T-cell (primary cell): ENCODE measurements at regions of chr2 and their contacts with region 1.

Region 1: GRCh38 chr2:85888684-85889626 is at the start of gene ST3GAL5:
- DNase-seq: peak; percentile 81 to 97 (median 90)
- ATAC-seq: peak; percentile 82 to 89 (median 86)
- H3K4me3 ChIP-seq: peak within 1 kb of the TSS; percentile 85 to 92
- H3K4me3 Mint-ChIP-seq: peak within 1 kb of the TSS; percentile 93 to 96 (median 95)
- H3K27ac ChIP-seq: peak within 1 kb of the TSS; percentile 80
- H3K27ac Mint-ChIP-seq: peak within 1 kb of the TSS; percentile 93 to 98
- H3K4me1 ChIP-seq: peaks cover 30 to 67% of the 10 kb centered on the region in 2 experiments
- H3K4me1 Mint-ChIP-seq: peaks cover 70 to 77% (median 76%) of the 10 kb centered on the region in 3 donors
- H3K27me3 ChIP-seq: no peaks in the 10 kb centered on the region
- H3K27me3 Mint-ChIP-seq: no peaks in the 10 kb centered on the region
- total RNA-seq, gene ST3GAL5: 22.8 to 56.2 (median 31.9) TPM

Region 2: DNA sequence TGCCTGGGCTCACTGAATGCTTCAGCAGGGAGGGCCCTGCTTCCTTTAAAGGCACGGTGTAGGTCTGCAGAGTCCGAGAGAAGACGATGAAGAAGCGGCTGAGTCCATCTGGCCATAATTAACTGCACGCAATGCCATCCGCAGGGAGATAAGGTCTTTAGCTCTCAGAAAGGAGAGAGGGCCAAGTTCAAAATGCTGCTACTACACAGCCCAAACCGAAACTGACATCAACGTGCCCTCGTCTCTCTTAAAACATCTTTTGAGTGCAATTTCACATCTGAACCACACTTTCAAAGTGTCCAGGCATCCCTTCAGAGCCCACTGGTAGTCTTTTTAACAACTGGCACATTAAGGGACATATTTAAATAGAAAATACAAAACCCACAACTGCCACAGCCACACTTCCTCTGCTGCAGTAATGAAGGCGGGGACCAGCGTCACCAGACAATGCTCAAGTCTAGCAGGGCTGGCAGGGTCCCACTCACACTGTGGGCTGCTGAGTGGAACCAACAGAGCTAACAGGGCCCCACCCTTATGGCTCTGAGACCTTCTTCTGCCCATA is 35.9 kb before region 1 on chr2:
- CTCF ChIA-PET with region 1: interaction called in 1 of 2 experiments, 40 read pairs
- POLR2A ChIA-PET with region 1: no interaction called
- DNase-seq: peak; percentile 46 to 86 (median 74)
- ATAC-seq: peak; percentile 83 to 86 (median 85)
- H3K4me3 ChIP-seq: peak overlapping the region; percentile 41 to 60
- H3K4me3 Mint-ChIP-seq: peak overlapping the region; percentile 69 to 81 (median 77)
- H3K27ac ChIP-seq: peak overlapping the region; percentile 97
- H3K27ac Mint-ChIP-seq: peak overlapping the region; percentile 99 to 100
- H3K4me1 ChIP-seq: peaks cover 35 to 64% of the 10 kb centered on the region in 2 experiments
- H3K4me1 Mint-ChIP-seq: peaks cover 67 to 86% (median 76%) of the 10 kb centered on the region in 3 donors
- H3K27me3 ChIP-seq: no peaks in the 10 kb centered on the region
- H3K27me3 Mint-ChIP-seq: no peaks in the 10 kb centered on the region

Region 3: GRCh38 chr2:86035883-86036668 is 147.1 kb after region 1 on chr2:
- CTCF ChIA-PET with region 1: interaction called in 1 of 2 experiments, 28 read pairs
- POLR2A ChIA-PET with region 1: interaction called, 3 to 5 read pairs
- DNase-seq: peak; percentile 38 to 88 (median 75)
- ATAC-seq: peak; percentile 52 to 57 (median 54)
- H3K4me3 ChIP-seq: peak overlapping the region; percentile 27 to 30
- H3K4me3 Mint-ChIP-seq: peak overlapping the region; percentile 67 to 78 (median 74)
- H3K27ac ChIP-seq: peak overlapping the region; percentile 96
- H3K27ac Mint-ChIP-seq: peak overlapping the region; percentile 99
- H3K4me1 ChIP-seq: peaks cover 65 to 84% of the 10 kb centered on the region in 2 experiments
- H3K4me1 Mint-ChIP-seq: peaks cover 85 to 96% (median 89%) of the 10 kb centered on the region in 3 donors
- H3K27me3 ChIP-seq: no peaks in the 10 kb centered on the region
- H3K27me3 Mint-ChIP-seq: no peaks in the 10 kb centered on the region

Region 4: GRCh38 chr2:86079981-86080911 is 191.3 kb after region 1 on chr2:
- CTCF ChIA-PET with region 1: interaction called, 3 to 18 read pairs
- POLR2A ChIA-PET with region 1: no interaction called
- DNase-seq: peak; percentile 66 to 90 (median 83)
- ATAC-seq: peak; percentile 77 to 88 (median 84)
- H3K4me3 ChIP-seq: no peak overlapping the region
- H3K4me3 Mint-ChIP-seq: peak overlapping the region in 1 of 3 donors; percentile 10
- H3K27ac ChIP-seq: peak overlapping the region; percentile 82
- H3K27ac Mint-ChIP-seq: peak overlapping the region; percentile 87 to 88
- H3K4me1 ChIP-seq: peaks cover 0 to 34% of the 10 kb centered on the region in 2 experiments
- H3K4me1 Mint-ChIP-seq: peaks cover 24 to 36% (median 33%) of the 10 kb centered on the region in 3 donors
- H3K27me3 ChIP-seq: no peaks in the 10 kb centered on the region
- H3K27me3 Mint-ChIP-seq: no peaks in the 10 kb centered on the region

Region 5: DNA sequence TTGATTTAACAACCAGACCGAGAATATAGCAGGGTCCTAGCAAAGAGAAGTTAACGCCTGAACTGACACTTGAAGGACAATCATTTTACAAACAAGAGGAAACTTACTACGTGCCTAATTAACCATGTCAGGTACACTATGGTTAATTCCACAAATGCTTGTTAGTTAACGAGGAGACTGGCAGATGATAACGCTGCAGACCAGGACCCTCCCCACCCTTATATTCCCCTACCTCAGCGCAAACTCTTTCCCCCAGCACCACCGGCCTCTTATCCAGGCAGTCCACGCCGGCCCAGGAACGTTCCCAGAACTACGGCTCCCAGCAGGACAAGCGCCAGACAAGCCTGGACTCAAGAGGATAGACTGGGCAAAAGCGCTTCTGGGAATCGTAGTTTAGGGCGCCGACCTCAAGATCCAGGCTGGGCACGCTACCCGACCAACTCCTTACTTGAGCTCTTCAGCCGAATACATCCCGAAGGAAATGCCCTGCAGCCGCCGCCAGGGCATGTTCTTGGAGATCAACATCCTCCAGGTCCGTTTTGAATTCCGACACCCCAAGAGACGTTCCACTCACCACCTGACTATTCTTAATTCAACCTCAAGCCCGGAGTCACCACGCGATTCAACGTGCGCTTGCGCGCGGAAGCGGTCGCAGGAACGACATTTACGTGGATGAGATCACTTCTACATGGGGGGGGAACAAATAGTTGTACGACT is 216.5 kb after region 1 on chr2 and contains the start of gene POLR1A:
- CTCF ChIA-PET with region 1: interaction called in 1 of 2 experiments, 10 read pairs
- POLR2A ChIA-PET with region 1: no interaction called
- DNase-seq: peak; percentile 68 to 89 (median 78)
- ATAC-seq: peak; percentile 79 to 87 (median 85)
- H3K4me3 ChIP-seq: peak within 1 kb of the TSS; percentile 79 to 96
- H3K4me3 Mint-ChIP-seq: peak within 1 kb of the TSS; percentile 85 to 90 (median 90)
- H3K27ac ChIP-seq: peak within 1 kb of the TSS; percentile 84
- H3K27ac Mint-ChIP-seq: peak within 1 kb of the TSS; percentile 99
- H3K4me1 ChIP-seq: peaks cover 14 to 26% of the 10 kb centered on the region in 2 experiments
- H3K4me1 Mint-ChIP-seq: peaks cover 64 to 77% (median 71%) of the 10 kb centered on the region in 3 donors
- H3K27me3 ChIP-seq: no peaks in the 10 kb centered on the region
- H3K27me3 Mint-ChIP-seq: no peaks in the 10 kb centered on the region
- total RNA-seq, gene POLR1A: 22.0 to 28.7 (median 25.7) TPM